ENCODE measurements at regions of chr10 and their contacts with region 1.

Region 1: DNA sequence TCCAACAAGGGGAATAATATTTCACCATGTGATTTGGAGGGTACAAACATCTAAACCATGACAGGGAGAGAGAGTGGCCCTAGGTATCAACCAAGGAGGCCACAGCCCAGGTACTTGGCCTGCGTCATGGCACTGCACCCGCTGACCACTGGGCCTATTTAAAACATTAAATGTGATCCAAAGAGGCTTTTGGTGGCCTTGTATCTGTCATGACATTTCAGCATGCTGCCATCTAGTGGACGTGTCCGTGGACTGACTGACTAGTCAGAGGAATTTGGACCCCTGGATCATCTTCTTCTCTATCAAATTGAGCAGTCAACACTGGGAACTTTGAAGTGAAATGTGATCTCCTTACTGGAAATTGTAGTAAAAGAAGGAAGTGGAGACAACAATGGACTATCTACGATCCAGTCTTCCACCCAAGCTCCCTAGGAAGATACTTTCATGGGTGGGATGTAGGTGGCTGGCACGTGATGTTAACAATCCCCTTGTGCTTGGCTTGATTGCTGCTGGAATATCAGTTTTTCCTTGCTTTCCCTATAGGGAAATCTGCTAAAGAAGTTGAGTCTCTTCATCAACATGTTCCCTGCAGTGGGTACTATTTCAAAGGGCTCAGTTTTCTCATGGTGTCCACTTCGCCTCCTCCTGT is 24.6 kb upstream of the ITGA8 start:
- DNase-seq: peak; percentile 13
- ATAC-seq: peak; percentile 56; the same call in 1 of the 2 replicates
- H3K4me3 ChIP-seq: no peak overlapping the region
- H3K27ac ChIP-seq: no peak overlapping the region
- H3K4me1 ChIP-seq: no peaks in the 10 kb centered on the region
- H3K27me3 ChIP-seq: no peaks in the 10 kb centered on the region
- CTCF ChIP-seq: peak; percentile 66

Region 2: DNA sequence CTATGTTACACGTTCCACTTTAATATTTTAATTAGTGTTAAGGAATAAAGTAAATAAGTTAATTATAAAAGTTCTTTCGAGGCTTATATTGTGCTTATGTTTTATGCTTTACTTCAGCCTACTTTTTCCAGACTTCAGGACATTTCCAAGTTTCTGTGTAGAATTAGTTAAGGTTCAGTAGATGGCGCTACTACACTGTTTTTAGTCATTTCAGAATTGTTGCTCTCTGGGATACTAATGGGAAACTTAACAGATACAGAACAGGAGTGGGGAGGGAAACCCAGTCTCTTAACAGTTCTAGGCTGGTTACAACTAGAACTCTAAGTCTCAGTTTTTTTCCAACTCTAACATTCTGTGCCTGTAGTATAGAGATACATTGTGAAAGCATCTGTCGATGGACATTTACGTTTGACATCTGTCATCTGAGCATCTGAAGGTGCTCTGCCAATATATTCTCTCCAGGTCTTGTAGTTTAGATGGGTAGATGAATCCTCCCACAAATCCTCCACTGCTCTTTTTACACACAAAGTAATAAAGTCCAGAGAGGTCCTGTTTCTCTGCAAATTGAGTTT is 316.4 kb before region 1 on chr10:
- CTCF ChIA-PET with region 1: no interaction called
- POLR2A ChIA-PET with region 1: no interaction called
- in situ Hi-C with region 1: no loop called
- intact Hi-C with region 1: loop called (anchors 5 kb)
- DNase-seq: no peak
- ATAC-seq: peak; percentile 60
- H3K4me3 ChIP-seq: no peak overlapping the region
- H3K27ac ChIP-seq: no peak overlapping the region
- H3K4me1 ChIP-seq: no peaks in the 10 kb centered on the region
- H3K27me3 ChIP-seq: no peaks in the 10 kb centered on the region
- CTCF ChIP-seq: peak; percentile 54; the same call in 1 of the 2 replicates

Region 3: DNA sequence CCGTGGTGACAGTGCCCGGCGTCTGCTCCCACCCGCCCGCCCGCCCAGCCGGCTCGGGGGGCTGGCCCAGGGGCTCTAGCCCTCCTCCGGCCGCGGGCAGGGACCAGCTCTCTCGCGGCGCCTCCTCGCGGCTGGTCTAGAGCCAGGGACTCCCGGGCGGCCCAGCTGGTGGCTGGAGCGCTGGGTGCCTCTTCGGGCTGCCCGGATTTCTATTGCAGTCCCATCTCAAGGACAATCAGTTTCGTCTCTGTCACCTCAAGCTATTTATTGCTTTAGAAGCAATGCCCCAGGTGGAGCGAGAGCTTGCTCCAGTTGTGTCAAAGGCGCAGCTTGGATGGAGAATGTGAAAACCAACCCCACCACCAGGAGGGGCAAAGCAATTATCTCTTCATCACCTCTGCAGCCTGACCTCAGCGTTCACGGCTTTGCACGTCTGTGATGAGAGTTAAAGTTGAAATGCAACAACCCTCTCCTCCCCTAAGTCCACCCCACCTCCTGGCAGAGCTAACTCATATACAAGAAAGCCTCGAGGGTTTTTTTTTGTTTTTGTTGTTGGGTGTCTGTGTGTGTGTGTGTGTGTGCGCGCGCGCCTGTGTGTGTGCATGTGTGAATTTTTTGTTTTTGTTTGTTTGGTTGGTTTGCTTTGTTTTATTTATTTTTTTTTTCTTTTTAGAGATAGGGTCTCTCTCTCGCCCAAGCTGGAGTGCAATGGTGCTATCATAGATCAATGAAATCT is 24.3 kb before region 1 on chr10 and contains the start of gene ITGA8:
- CTCF ChIA-PET with region 1: no interaction called
- POLR2A ChIA-PET with region 1: no interaction called
- in situ Hi-C with region 1: no loop called
- intact Hi-C with region 1: no loop called
- DNase-seq: no peak
- ATAC-seq: 0 out of 2 replicates have a peak, but pooled peaks have one; percentile 51
- H3K4me3 ChIP-seq: no peak within 1 kb of the TSS
- H3K27ac ChIP-seq: no peak within 1 kb of the TSS
- H3K4me1 ChIP-seq: no peaks in the 10 kb centered on the region
- H3K27me3 ChIP-seq: peaks cover 5% of the 10 kb centered on the region
- CTCF ChIP-seq: peak; percentile 37
- total RNA-seq, gene ITGA8: 0.18 TPM

Measured in Panc1 (cell line).